GM12878 (cell line): ENCODE measurements at regions of chr14 and their contacts with region 1.

Region 1: GRCh38 chr14:73741386-73741875 is 27.2 kb upstream of the PNMA1 start:
- DNase-seq: no peak
- ATAC-seq: peak; percentile 60
- H3K4me3 ChIP-seq: peak overlapping the region; percentile 55
- H3K27ac ChIP-seq: peak overlapping the region; percentile 81
- H3K4me1 ChIP-seq: peaks cover 55% of the 10 kb centered on the region
- H3K27me3 ChIP-seq: no peaks in the 10 kb centered on the region
- CTCF ChIP-seq: no peak
- EP300 ChIP-seq: no peak
- POLR2A ChIP-seq: no peak
- RAD21 ChIP-seq: no peak

Region 2: DNA sequence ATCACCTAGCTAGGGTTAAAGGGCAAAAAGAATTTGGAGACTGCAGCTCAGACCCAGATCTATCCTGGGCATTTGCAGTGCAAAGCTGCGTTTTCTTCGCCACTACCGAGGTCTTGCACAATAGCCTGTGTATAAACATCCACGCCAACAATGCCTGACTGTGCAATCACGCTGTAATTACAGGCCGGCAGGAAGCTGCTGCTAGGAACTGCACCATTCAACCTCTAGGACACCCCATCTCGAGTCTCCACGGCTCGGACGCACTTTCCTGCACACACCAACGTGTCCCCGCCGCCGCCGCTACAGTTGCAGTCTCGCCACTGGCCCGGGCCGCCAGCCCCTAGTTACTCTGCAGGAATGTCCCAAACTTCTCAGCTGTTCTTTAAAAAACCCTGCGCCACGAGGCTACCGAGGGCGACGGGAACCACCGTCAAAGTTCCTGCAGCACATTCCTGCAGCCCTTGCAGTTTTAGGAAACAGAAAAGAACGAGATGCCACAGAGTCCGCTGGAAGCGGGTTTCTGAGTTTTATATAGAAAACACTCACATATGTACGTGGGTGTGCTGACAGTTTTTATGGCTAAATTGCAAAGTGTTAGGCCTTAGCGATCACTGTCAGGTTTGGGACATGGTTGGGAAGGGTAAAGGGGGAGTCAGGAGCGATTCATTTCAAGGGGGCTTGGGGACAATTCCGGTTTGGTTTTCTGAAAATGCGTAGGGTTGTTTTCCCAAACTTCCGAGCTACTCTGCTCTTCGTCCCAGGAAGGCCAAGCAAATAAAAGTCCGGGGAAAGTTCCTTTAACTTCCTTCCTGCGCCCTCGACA is 44.7 kb after region 1 on chr14:
- CTCF ChIA-PET with region 1: interaction called, 4 read pairs
- POLR2A ChIA-PET with region 1: interaction called, 5 read pairs
- RAD21 ChIA-PET with region 1: interaction called, 16 read pairs
- SMC1A ChIA-PET with region 1: interaction called, 11 read pairs
- in situ Hi-C with region 1: no loop called
- intact Hi-C with region 1: no loop called
- DNase-seq: no peak
- ATAC-seq: peak; percentile 75
- H3K4me3 ChIP-seq: peak overlapping the region; percentile 97
- H3K27ac ChIP-seq: peak overlapping the region; percentile 94
- H3K4me1 ChIP-seq: peaks cover 41% of the 10 kb centered on the region
- H3K27me3 ChIP-seq: no peaks in the 10 kb centered on the region
- CTCF ChIP-seq: no peak
- EP300 ChIP-seq: no peak
- POLR2A ChIP-seq: peak; percentile 81
- RAD21 ChIP-seq: no peak